Prostate gland (tissue), 2 donors: ENCODE measurements at regions of chr9 and their contacts with region 1.

Region 1: DNA sequence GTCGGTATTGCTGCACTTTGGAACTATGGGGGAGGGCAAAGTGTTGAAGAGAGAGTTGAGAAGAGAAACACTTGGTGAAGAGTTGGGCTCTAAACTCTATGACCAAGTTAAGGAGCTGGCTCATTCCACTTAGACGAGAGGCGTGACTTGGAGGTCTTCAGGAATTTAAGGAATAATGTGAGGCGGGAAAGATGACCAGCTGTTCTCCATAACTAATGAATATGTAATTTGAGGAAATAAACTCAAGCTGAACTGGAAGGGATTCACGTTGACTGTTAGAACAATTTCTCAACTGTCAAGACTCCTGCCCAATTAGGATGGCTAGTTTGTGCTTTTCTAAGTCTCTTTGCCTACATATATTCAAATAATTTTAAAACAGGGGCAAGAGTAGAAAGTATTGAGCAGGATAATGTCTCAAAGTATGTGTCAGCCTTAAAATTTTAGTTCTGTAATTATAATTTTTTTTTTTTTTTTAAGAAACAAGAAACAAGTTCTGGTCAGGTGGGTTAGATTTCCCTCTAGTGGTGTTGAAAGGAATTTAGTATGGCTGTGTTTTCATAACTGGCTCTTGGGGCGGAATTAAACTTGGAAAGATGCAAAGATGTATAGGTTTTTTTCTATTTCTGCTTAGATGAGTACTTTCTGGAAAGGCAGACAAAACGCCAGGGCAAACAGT is 33.4 kb downstream of the TMEM252 start:
- DNase-seq: no peak
- H3K4me3 ChIP-seq: no peak overlapping the region
- H3K27ac ChIP-seq: peak overlapping the region; percentile 56 to 61
- H3K4me1 ChIP-seq: no peaks in the 10 kb centered on the region
- H3K27me3 ChIP-seq: no peaks in the 10 kb centered on the region
- CTCF ChIP-seq: peak; percentile 61 to 85 (median 68)
- POLR2A ChIP-seq: no peak

Region 2: GRCh38 chr9:68446836-68447235 is 60.4 kb before region 1 on chr9:
- intact Hi-C with region 1: loop called (anchors 5 kb)
- DNase-seq: peak; percentile 24
- H3K4me3 ChIP-seq: no peak overlapping the region
- H3K27ac ChIP-seq: peak overlapping the region; percentile 51 to 64
- H3K4me1 ChIP-seq: peaks cover 2% of the 10 kb centered on the region
- H3K27me3 ChIP-seq: no peaks in the 10 kb centered on the region
- CTCF ChIP-seq: no peak
- POLR2A ChIP-seq: no peak